Activated CD8-positive, alpha-beta T cell treated with anti-CD3 and anti-CD28 coated beads for 36 hours (primary cell): ENCODE measurements at regions of chr5 and their contacts with region 1.

Region 1: GRCh38 chr5:54867310-54867944 is 118.0 kb downstream of the ESM1 start:
- DNase-seq: no peak
- ATAC-seq: peak; percentile 17
- H3K4me3 Mint-ChIP-seq: no peak overlapping the region
- H3K27ac Mint-ChIP-seq: no peak overlapping the region
- H3K4me1 Mint-ChIP-seq: peaks cover 27% of the 10 kb centered on the region
- H3K27me3 Mint-ChIP-seq: peaks cover 24% of the 10 kb centered on the region
- CTCF ChIP-seq: peak; percentile 71

Region 2: GRCh38 chr5:54492178-54492577 is 375.2 kb before region 1 on chr5:
- CTCF ChIA-PET with region 1: interaction called, 11 read pairs
- POLR2A ChIA-PET with region 1: no interaction called
- intact Hi-C with region 1: no loop called
- DNase-seq: no peak
- ATAC-seq: no peak
- H3K4me3 Mint-ChIP-seq: no peak overlapping the region
- H3K27ac Mint-ChIP-seq: no peak overlapping the region
- H3K4me1 Mint-ChIP-seq: no peaks in the 10 kb centered on the region
- H3K27me3 Mint-ChIP-seq: peaks cover 2% of the 10 kb centered on the region
- CTCF ChIP-seq: no peak

Region 3: DNA sequence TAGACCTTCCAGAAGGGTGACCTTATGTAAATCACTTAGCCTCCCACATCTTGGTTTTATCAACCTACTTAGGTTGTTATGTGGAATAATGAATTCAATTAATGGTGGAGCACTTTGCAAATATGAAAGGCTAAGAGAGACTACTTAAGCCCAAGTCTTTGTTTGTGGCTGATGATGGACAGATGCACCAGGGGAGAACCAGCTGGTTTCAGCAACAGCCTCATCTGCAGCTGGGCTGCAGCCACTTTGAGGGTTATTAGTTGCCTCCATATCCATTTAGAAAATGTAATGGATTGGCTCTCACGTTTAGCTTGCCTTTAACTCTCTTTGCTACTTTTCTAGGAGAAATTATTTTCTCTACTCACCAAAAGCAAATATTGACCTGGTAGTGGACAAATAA is 28.6 kb before region 1 on chr5:
- CTCF ChIA-PET with region 1: interaction called, 26 read pairs
- POLR2A ChIA-PET with region 1: no interaction called
- intact Hi-C with region 1: no loop called
- DNase-seq: no peak
- ATAC-seq: no peak
- H3K4me3 Mint-ChIP-seq: no peak overlapping the region
- H3K27ac Mint-ChIP-seq: no peak overlapping the region
- H3K4me1 Mint-ChIP-seq: peaks cover 13% of the 10 kb centered on the region
- H3K27me3 Mint-ChIP-seq: peaks cover 2% of the 10 kb centered on the region
- CTCF ChIP-seq: no peak

Region 4: GRCh38 chr5:54852007-54852406 is 15.4 kb before region 1 on chr5:
- CTCF ChIA-PET with region 1: interaction called, 26 read pairs
- POLR2A ChIA-PET with region 1: no interaction called
- intact Hi-C with region 1: no loop called
- DNase-seq: no peak
- ATAC-seq: no peak
- H3K4me3 Mint-ChIP-seq: no peak overlapping the region
- H3K27ac Mint-ChIP-seq: no peak overlapping the region
- H3K4me1 Mint-ChIP-seq: no peaks in the 10 kb centered on the region
- H3K27me3 Mint-ChIP-seq: peaks cover 27% of the 10 kb centered on the region
- CTCF ChIP-seq: no peak

Region 5: DNA sequence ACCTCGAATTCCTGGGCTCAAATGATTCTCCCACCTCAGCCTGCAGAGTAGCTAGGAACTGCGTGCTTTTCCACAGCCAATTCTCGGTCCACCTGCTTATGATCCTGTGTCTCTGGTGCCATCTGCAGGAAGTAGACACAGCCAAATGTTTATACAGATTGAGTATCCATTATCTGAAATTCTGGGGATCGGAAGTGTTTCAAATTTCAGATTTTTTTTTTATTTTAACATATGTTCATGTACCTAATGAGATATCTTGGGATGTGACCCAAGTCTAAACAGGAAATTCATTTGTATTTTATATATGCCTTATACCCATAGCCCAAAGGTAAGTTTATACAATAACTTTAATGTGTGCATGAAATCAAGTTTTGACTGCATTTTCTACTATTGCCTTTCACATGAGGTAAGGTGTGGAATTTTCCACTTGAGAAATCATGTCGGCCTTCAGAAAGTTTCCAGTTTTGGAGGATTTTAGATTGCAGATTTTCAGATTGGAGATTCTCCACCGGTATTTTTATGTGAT is 28.5 kb after region 1 on chr5:
- CTCF ChIA-PET with region 1: interaction called, 16 read pairs
- POLR2A ChIA-PET with region 1: no interaction called
- intact Hi-C with region 1: loop called (anchors 5 kb)
- DNase-seq: peak; percentile 25
- ATAC-seq: peak; percentile 53
- H3K4me3 Mint-ChIP-seq: no peak overlapping the region
- H3K27ac Mint-ChIP-seq: no peak overlapping the region
- H3K4me1 Mint-ChIP-seq: peaks cover 5% of the 10 kb centered on the region
- H3K27me3 Mint-ChIP-seq: peaks cover 47% of the 10 kb centered on the region
- CTCF ChIP-seq: peak; percentile 51

Region 6: DNA sequence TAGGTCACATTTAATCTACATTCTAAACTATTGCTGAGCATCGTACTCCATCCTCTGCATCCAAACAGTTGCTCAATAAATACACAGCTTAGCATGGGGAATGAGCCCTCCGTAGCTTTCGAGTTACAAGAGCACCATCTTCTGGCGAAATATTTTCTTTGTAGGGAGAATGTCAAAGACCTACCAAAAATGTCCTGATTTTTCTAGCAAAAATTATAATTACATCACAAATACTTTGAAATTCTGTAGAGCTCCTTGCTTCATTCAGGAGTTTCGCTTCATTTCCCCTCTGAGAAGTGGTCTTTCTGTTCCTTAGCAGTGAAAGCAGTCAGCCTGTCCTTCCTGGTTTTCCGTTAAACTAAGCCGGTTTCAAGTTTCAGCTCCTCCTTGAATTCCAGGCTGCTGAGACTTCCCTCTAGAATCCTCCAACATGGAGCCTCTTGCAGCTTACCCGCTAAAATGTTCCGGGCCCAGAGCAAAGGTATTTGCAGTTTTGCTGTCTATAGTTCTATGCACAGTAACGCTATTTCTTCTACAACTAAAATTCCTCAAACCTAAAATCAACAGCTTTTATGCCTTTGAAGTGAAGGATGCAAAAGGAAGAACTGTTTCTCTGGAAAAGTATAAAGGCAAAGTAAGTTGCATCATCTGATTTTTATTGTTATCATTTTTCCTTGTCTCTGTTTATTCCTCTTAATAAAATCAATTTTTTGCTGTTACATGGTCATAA is 292.5 kb after region 1 on chr5 and contains the start of gene GPX8:
- CTCF ChIA-PET with region 1: interaction called, 15 read pairs
- POLR2A ChIA-PET with region 1: no interaction called
- intact Hi-C with region 1: no loop called
- DNase-seq: peak; percentile 20
- ATAC-seq: peak; percentile 37
- H3K4me3 Mint-ChIP-seq: no peak within 1 kb of the TSS
- H3K27ac Mint-ChIP-seq: no peak within 1 kb of the TSS
- H3K4me1 Mint-ChIP-seq: no peaks in the 10 kb centered on the region
- H3K27me3 Mint-ChIP-seq: peaks cover 20% of the 10 kb centered on the region
- CTCF ChIP-seq: peak; percentile 67
- total RNA-seq, gene GPX8: not detected